WTC11 (cell line): ENCODE measurements at regions of chr5 and their contacts with region 1.

Region 1: GRCh38 chr5:154984946-154985516 is 28.5 kb upstream of the KIF4B start:
- DNase-seq: no peak
- ATAC-seq: no peak
- H3K4me3 Mint-ChIP-seq: no peak overlapping the region
- H3K27ac Mint-ChIP-seq: no peak overlapping the region
- H3K4me1 Mint-ChIP-seq: peaks cover 8% of the 10 kb centered on the region
- H3K27me3 Mint-ChIP-seq: no peaks in the 10 kb centered on the region
- CTCF ChIP-seq: no peak

Region 2: GRCh38 chr5:154940772-154941620 is 44.0 kb before region 1 on chr5 and contains the start of gene MRPL22:
- CTCF ChIA-PET with region 1: no interaction called
- POLR2A ChIA-PET with region 1: no interaction called
- DNase-seq: peak; percentile 92
- ATAC-seq: peak; percentile 30
- H3K4me3 Mint-ChIP-seq: peak within 1 kb of the TSS; percentile 97
- H3K27ac Mint-ChIP-seq: peak within 1 kb of the TSS; percentile 83
- H3K4me1 Mint-ChIP-seq: peaks cover 16% of the 10 kb centered on the region
- H3K27me3 Mint-ChIP-seq: peaks cover 2% of the 10 kb centered on the region; the same call in 1 of the 2 replicates
- CTCF ChIP-seq: no peak
- total RNA-seq, gene MRPL22: 52.0 to 62.3 TPM (median 60.1 TPM) in 3 replicates

Region 3: DNA sequence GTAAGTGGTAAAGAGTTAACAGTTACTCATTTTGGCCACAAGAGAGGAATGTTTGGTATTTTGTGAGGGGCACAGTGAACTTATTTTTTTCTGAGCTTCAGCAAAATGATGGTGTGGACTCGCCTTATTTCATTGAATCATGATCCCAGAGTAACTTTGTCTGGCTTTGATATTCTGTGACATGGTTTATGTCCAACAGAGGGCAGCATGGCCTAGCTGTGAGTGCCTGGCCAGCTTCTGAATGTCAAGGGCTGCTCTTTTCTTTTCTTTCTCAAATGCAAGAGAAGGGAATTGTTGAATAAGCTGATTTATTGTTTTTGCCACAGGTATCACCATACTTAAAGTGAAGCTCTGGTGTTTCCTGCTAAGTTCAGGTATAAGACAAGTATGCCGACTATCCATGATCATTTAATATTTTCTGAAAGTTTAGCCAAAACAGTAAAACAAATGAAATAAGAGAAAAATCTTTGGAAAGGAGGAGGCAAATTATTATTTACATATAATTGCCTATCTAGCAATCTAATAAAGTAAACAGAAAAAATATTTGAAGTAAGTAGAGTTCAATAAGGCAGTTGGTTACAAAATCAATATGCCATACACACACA is 12.5 kb before region 1 on chr5:
- CTCF ChIA-PET with region 1: interaction called, 11 read pairs
- POLR2A ChIA-PET with region 1: no interaction called
- DNase-seq: peak; percentile 32
- ATAC-seq: peak; percentile 75
- H3K4me3 Mint-ChIP-seq: no peak overlapping the region
- H3K27ac Mint-ChIP-seq: no peak overlapping the region
- H3K4me1 Mint-ChIP-seq: no peaks in the 10 kb centered on the region
- H3K27me3 Mint-ChIP-seq: no peaks in the 10 kb centered on the region
- CTCF ChIP-seq: peak; percentile 34; the same call in 1 of the 2 replicates